ENCODE measurements at regions of chr20 and their contacts with region 1.

Region 1: GRCh38 chr20:58309575-58310290 is at the start of gene RAB22A:
- DNase-seq: peak; percentile 89
- H3K4me3 ChIP-seq: peak within 1 kb of the TSS; percentile 78 to 98 (median 88)
- H3K27ac ChIP-seq: peak within 1 kb of the TSS; percentile 90 to 91 (median 90)
- H3K4me1 ChIP-seq: peaks cover 9 to 50% (median 29%) of the 10 kb centered on the region in 4 donors
- H3K27me3 ChIP-seq: no peaks in the 10 kb centered on the region
- CTCF ChIP-seq: no peak
- EP300 ChIP-seq: no peak
- POLR2A ChIP-seq: peak; percentile 1
- total RNA-seq, gene RAB22A: 4.2 to 25.9 (median 20.7) TPM

Region 2: DNA sequence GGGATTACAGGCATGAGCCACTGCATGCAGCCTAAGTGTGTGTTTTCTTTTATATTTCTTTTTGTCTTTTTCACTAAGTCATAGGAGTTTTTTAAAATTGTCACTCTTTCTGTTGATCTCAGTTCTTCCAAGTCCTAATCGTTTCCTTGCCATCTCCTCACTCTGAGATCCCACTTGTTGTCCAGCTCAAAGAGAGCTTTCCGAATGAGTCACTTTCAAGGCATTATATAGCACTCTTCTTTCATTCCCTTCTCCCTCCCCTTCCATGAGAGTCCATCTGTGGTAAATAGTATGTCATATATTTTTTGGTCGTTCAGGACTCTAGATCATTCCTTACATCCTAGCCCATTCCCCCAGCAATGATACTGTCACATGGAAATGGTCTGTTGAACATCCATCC is 83.6 kb after region 1 on chr20:
- in situ Hi-C with region 1: loop called in 1 of 4 experiments (anchors 5 kb)
- intact Hi-C with region 1: no loop called
- DNase-seq: no peak
- H3K4me3 ChIP-seq: no peak overlapping the region
- H3K27ac ChIP-seq: no peak overlapping the region
- H3K4me1 ChIP-seq: peaks cover 11 to 57% (median 21%) of the 10 kb centered on the region in 4 donors
- H3K27me3 ChIP-seq: no peaks in the 10 kb centered on the region
- CTCF ChIP-seq: no peak
- EP300 ChIP-seq: no peak
- POLR2A ChIP-seq: no peak

Region 3: GRCh38 chr20:58407966-58408557 is 98.3 kb after region 1 on chr20:
- in situ Hi-C with region 1: loop called in 1 of 4 experiments (anchors 25 kb)
- intact Hi-C with region 1: no loop called
- DNase-seq: no peak
- H3K4me3 ChIP-seq: no peak overlapping the region
- H3K27ac ChIP-seq: peak overlapping the region in 3 of 4 donors; percentile 0 to 44 (median 38)
- H3K4me1 ChIP-seq: peaks cover 0 to 43% (median 15%) of the 10 kb centered on the region in 4 donors
- H3K27me3 ChIP-seq: no peaks in the 10 kb centered on the region
- CTCF ChIP-seq: no peak
- EP300 ChIP-seq: no peak
- POLR2A ChIP-seq: no peak